ENCODE measurements at regions of chr1 and their contacts with region 1.

Region 1: DNA sequence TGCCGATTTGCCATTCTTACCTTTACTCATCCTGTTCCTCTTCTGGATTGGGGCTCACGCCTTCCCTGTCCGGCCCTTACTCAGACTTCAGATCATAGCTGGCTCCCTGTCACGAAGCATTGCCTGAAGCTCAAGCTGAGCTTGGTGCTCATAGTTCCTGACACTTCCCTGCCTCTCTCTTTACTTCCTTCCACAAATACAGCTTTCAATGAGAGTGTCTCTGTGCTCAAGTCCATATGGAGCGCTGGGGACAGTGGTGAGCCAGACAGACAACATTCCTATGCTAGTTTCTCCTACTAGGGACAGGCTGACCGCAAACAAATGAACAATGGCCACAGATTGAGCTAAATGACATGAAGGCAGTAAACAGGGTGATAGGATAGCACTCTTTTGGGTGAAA is 38.1 kb downstream of the HHAT start:
- DNase-seq: peak; percentile 86
- ATAC-seq: peak; percentile 98
- H3K4me3 ChIP-seq: peak overlapping the region; percentile 5 to 40 (median 36); a peak in 4 of 6 replicates
- H3K27ac ChIP-seq: peak overlapping the region; percentile 67
- H3K4me1 ChIP-seq: peaks cover 81% of the 10 kb centered on the region
- H3K27me3 ChIP-seq: no peaks in the 10 kb centered on the region
- CTCF ChIP-seq: no peak
- EP300 ChIP-seq: peak in 1 of 2 experiments; percentile 34; a peak in 1 of 4 replicates
- POLR2A ChIP-seq: no peak
- RAD21 ChIP-seq: no peak

Region 2: GRCh38 chr1:209926045-209926444 is 440.7 kb before region 1 on chr1:
- CTCF ChIA-PET with region 1: no interaction called
- POLR2A ChIA-PET with region 1: no interaction called
- in situ Hi-C with region 1: no loop called
- intact Hi-C with region 1: loop called (anchors 5 kb)
- DNase-seq: no peak
- ATAC-seq: no peak
- H3K4me3 ChIP-seq: no peak overlapping the region
- H3K27ac ChIP-seq: no peak overlapping the region
- H3K4me1 ChIP-seq: no peaks in the 10 kb centered on the region
- H3K27me3 ChIP-seq: no peaks in the 10 kb centered on the region; a peak in 1 of 5 replicates
- CTCF ChIP-seq: no peak
- EP300 ChIP-seq: no peak
- POLR2A ChIP-seq: no peak
- RAD21 ChIP-seq: no peak

Region 3: GRCh38 chr1:210262167-210262896 is 104.4 kb before region 1 on chr1:
- CTCF ChIA-PET with region 1: no interaction called
- POLR2A ChIA-PET with region 1: no interaction called
- in situ Hi-C with region 1: no loop called
- intact Hi-C with region 1: no loop called
- DNase-seq: peak; percentile 32
- ATAC-seq: no peak
- H3K4me3 ChIP-seq: no peak overlapping the region
- H3K27ac ChIP-seq: no peak overlapping the region
- H3K4me1 ChIP-seq: peaks cover 19% of the 10 kb centered on the region
- H3K27me3 ChIP-seq: peaks cover 0 to 22% of the 10 kb centered on the region in 2 experiments; a peak in 1 of 5 replicates
- CTCF ChIP-seq: no peak
- EP300 ChIP-seq: no peak
- POLR2A ChIP-seq: no peak
- RAD21 ChIP-seq: no peak

Region 4: GRCh38 chr1:210328746-210329503 is 37.8 kb before region 1 on chr1 and contains the start of gene HHAT:
- CTCF ChIA-PET with region 1: no interaction called
- POLR2A ChIA-PET with region 1: interaction called, 6 read pairs
- in situ Hi-C with region 1: no loop called
- intact Hi-C with region 1: loop called (anchors 2 kb)
- DNase-seq: peak; percentile 49
- ATAC-seq: peak; percentile 94
- H3K4me3 ChIP-seq: peak within 1 kb of the TSS; percentile 69 to 85 (median 73)
- H3K27ac ChIP-seq: peak within 1 kb of the TSS; percentile 73
- H3K4me1 ChIP-seq: peaks cover 19% of the 10 kb centered on the region
- H3K27me3 ChIP-seq: no peaks in the 10 kb centered on the region; a peak in 1 of 5 replicates
- CTCF ChIP-seq: peak; percentile 26; the same call in 1 of the 2 replicates
- EP300 ChIP-seq: no peak
- POLR2A ChIP-seq: peak; percentile 61 to 67
- RAD21 ChIP-seq: no peak
- total RNA-seq, gene HHAT: 2.9 and 4.9 TPM in 2 replicates

Region 5: DNA sequence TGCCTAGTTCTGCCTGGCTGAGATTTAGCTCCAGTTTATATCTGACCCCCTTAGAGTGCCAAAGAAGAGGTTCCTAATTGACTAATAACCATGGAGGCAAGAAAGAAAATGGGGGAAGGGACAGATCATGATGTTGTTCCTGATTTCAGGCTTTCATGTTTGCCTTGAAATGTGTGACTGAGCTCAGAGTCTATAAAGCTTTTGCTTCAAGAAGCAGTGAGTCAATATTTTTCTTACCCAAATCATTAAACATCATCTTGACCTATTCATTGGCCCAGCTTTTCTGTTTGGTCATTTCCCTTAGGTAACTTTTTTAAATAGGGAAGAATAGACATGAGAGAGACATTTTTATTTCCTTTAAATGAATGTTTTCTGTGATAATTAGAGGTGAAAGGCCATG is 17.9 kb after region 1 on chr1:
- CTCF ChIA-PET with region 1: no interaction called
- POLR2A ChIA-PET with region 1: interaction called, 53 read pairs
- in situ Hi-C with region 1: no loop called
- intact Hi-C with region 1: loop called (anchors 2 kb)
- DNase-seq: no peak
- ATAC-seq: no peak; the same call in 2 of the 3 replicates
- H3K4me3 ChIP-seq: no peak overlapping the region
- H3K27ac ChIP-seq: peak overlapping the region; percentile 23
- H3K4me1 ChIP-seq: peaks cover 33% of the 10 kb centered on the region
- H3K27me3 ChIP-seq: no peaks in the 10 kb centered on the region
- CTCF ChIP-seq: no peak
- EP300 ChIP-seq: no peak
- POLR2A ChIP-seq: no peak
- RAD21 ChIP-seq: no peak

Region 6: GRCh38 chr1:210394281-210394821 is 27.6 kb after region 1 on chr1:
- CTCF ChIA-PET with region 1: interaction called, 67 read pairs
- POLR2A ChIA-PET with region 1: no interaction called
- in situ Hi-C with region 1: no loop called
- intact Hi-C with region 1: loop called (anchors 2 kb)
- DNase-seq: no peak
- ATAC-seq: no peak
- H3K4me3 ChIP-seq: no peak overlapping the region
- H3K27ac ChIP-seq: no peak overlapping the region
- H3K4me1 ChIP-seq: peaks cover 29% of the 10 kb centered on the region
- H3K27me3 ChIP-seq: no peaks in the 10 kb centered on the region
- CTCF ChIP-seq: no peak
- EP300 ChIP-seq: no peak
- POLR2A ChIP-seq: no peak
- RAD21 ChIP-seq: no peak

Measured in HepG2 (cell line).